ENCODE measurements at regions of chr6 and their contacts with region 1.

Region 1: GRCh38 chr6:29082457-29082856 is 4.7 kb downstream of the OR2B3 start:
- H3K4me3 ChIP-seq: no peak overlapping the region
- H3K27ac ChIP-seq: no peak overlapping the region
- H3K4me1 ChIP-seq: no peaks in the 10 kb centered on the region
- CTCF ChIP-seq: no peak

Region 2: DNA sequence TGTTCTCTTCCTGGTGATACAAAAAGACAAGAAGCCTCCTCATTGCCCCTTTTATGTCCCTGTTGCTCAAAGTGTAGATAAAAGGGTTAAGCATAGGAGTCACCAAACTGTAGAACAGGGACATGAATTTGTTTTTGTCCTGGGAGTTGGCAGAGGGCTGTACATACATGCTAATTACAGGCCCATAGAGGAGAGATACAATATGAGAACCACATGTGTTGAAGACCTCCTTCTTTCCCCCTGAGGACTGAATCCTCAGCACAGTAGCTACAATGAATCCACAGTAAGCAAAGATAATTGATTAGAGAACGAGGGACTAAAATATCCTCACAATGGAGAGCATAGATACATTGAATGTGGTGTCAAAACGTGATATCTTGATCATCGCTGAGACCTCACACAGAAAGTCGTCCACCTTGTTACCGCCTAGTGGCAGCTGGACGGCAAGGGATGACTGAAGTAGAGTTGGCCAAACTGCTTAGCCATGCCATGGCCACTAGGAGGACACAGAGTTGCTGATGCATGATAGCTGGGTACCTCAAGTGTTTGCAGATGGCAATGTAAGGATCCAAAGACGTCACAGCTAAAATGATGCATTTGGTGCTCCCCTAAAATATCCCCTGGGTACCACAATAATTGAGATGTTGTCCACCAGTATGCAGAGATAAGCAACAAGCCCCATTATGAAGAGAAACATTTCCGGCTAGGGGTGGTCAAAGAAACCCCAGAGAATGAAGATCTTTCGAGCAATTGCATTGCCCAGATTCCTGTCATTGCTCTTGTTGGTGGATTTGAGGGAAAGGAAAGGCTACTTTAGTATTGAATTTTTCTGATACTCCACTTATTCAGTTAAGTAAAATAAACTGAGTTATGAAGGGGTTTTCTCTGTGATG is 10.4 kb before region 1 on chr6:
- CTCF ChIA-PET with region 1: interaction called, 10 read pairs
- POLR2A ChIA-PET with region 1: no interaction called
- H3K4me3 ChIP-seq: no peak overlapping the region
- H3K27ac ChIP-seq: no peak overlapping the region
- H3K4me1 ChIP-seq: no peaks in the 10 kb centered on the region
- CTCF ChIP-seq: peak; percentile 66; the same call in 1 of the 2 replicates